ENCODE measurements at regions of chr2 and their contacts with region 1.

Region 1: DNA sequence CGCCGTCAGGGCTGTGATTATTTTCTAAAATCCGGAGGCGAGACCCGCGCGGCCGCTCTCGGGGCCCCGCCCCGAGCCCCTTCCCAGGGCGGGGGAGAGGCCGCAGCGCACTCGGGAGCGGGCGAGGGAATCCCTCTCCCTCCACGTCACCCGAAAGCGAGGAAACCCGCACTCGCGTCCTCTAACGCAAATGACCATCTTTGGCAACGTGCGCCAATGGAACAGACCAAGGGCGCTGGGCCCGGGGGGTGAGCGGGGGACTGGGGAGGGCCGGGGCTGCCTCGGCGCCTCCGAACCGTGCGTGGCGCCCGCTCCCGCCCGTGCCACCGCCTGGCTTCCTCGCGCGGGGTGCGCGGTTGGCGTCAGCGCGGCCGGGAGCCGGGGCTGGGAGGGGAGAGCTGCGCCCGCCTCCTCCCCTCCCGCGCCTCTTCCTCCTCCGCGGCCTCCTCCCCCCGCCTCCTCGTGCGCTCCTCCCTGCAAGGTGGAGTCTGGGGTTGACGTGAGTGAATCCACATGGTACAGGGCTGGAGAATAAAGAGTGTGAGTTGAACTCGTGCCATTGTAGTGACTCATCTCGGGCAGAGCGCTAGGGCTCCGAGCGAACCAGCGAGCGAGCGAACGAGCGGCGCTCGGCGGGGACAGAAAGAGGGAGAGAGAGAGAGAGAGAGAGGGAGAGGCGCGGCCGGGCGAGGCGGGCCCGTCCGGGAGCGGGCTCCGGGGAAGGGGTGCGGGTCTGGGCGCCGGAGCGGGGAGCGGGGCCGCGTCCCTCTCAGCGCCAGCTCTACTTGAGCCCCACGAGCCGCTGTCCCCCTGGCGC is at the start of gene FOSL2:
- DNase-seq: peak; percentile 98 to 99
- H3K4me3 ChIP-seq: peak within 1 kb of the TSS; percentile 69
- H3K4me3 Mint-ChIP-seq: no peak within 1 kb of the TSS
- H3K27ac Mint-ChIP-seq: peak within 1 kb of the TSS; percentile 95
- H3K4me1 ChIP-seq: peaks cover 36% of the 10 kb centered on the region
- H3K4me1 Mint-ChIP-seq: peaks cover 14% of the 10 kb centered on the region
- H3K27me3 ChIP-seq: no peaks in the 10 kb centered on the region
- H3K27me3 Mint-ChIP-seq: no peaks in the 10 kb centered on the region
- CTCF ChIP-seq: no peak
- total RNA-seq, gene FOSL2: 64.6 and 70.7 TPM in 2 replicates

Region 2: DNA sequence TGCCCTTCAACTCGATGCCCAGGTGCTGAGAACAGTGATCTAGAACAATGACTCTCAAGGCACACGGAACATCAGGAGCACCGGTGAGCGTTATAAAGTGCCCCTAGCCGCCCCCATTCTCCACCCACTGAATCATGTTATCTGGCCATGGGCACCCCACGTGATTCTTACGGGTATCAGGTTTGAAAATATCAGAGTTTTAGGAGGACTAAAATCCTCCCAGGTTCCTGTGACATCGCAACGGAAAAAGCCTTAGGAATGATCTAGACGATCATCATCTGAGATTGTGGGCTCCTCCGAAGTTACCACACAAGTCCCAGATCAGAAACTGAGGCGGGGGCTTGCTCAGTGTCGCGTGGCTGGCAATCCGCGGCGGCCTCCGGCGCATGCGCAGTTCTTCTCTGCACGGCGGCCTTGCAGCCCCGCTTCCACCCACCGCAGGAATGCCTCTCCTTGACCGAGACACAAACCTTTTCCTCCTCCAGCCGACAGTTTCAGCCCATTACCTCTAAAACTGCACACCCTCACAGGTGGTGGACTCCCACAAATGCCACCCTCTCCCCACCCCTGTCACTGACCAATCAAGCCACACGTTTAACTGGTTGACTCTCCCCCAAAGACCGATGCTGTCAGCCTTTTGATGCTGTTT is 626.8 kb before region 1 on chr2:
- CTCF ChIA-PET with region 1: no interaction called
- POLR2A ChIA-PET with region 1: no interaction called
- intact Hi-C with region 1: loop called (anchors 5 kb)
- DNase-seq: peak; percentile 95 to 96
- H3K4me3 ChIP-seq: peak overlapping the region; percentile 22
- H3K4me3 Mint-ChIP-seq: peak overlapping the region; percentile 85
- H3K27ac Mint-ChIP-seq: peak overlapping the region; percentile 98
- H3K4me1 ChIP-seq: peaks cover 59% of the 10 kb centered on the region
- H3K4me1 Mint-ChIP-seq: peaks cover 27% of the 10 kb centered on the region
- H3K27me3 ChIP-seq: no peaks in the 10 kb centered on the region
- H3K27me3 Mint-ChIP-seq: no peaks in the 10 kb centered on the region
- CTCF ChIP-seq: no peak

Region 3: DNA sequence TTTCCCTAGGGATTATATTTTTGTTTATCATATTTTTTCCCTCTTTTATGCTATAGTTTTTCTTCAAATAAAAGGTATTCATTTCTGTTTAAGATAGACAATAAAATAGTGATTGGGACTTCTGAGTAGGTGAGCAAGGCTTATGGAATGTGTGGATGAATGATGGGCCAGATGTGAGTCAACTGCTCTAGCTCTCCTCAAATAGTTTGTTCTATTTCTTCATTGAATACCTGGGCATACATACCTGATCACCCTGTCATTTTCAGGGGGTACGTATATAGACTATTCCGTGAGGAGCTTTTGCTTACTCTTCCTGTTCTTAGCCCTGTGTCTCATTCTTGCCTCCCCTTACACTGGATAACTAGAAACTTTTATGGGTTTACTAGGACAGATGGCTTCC is 460.1 kb before region 1 on chr2:
- CTCF ChIA-PET with region 1: no interaction called
- POLR2A ChIA-PET with region 1: interaction called, 5 read pairs
- intact Hi-C with region 1: loop called (anchors 5 kb)
- DNase-seq: peak in 1 of 2 experiments; percentile 31
- H3K4me3 ChIP-seq: no peak overlapping the region
- H3K4me3 Mint-ChIP-seq: peak overlapping the region; percentile 11
- H3K27ac Mint-ChIP-seq: peak overlapping the region; percentile 43
- H3K4me1 ChIP-seq: peaks cover 40% of the 10 kb centered on the region
- H3K4me1 Mint-ChIP-seq: peaks cover 21% of the 10 kb centered on the region
- H3K27me3 ChIP-seq: no peaks in the 10 kb centered on the region
- H3K27me3 Mint-ChIP-seq: no peaks in the 10 kb centered on the region
- CTCF ChIP-seq: no peak

Region 4: GRCh38 chr2:28155627-28156026 is 236.9 kb before region 1 on chr2:
- CTCF ChIA-PET with region 1: no interaction called
- POLR2A ChIA-PET with region 1: no interaction called
- intact Hi-C with region 1: loop called (anchors 2 kb)
- DNase-seq: peak in 1 of 2 experiments; percentile 63
- H3K4me3 ChIP-seq: no peak overlapping the region
- H3K4me3 Mint-ChIP-seq: peak overlapping the region; percentile 18
- H3K27ac Mint-ChIP-seq: peak overlapping the region; percentile 87
- H3K4me1 ChIP-seq: peaks cover 28% of the 10 kb centered on the region
- H3K4me1 Mint-ChIP-seq: peaks cover 24% of the 10 kb centered on the region
- H3K27me3 ChIP-seq: no peaks in the 10 kb centered on the region
- H3K27me3 Mint-ChIP-seq: no peaks in the 10 kb centered on the region
- CTCF ChIP-seq: peak; percentile 82 to 84

Region 5: DNA sequence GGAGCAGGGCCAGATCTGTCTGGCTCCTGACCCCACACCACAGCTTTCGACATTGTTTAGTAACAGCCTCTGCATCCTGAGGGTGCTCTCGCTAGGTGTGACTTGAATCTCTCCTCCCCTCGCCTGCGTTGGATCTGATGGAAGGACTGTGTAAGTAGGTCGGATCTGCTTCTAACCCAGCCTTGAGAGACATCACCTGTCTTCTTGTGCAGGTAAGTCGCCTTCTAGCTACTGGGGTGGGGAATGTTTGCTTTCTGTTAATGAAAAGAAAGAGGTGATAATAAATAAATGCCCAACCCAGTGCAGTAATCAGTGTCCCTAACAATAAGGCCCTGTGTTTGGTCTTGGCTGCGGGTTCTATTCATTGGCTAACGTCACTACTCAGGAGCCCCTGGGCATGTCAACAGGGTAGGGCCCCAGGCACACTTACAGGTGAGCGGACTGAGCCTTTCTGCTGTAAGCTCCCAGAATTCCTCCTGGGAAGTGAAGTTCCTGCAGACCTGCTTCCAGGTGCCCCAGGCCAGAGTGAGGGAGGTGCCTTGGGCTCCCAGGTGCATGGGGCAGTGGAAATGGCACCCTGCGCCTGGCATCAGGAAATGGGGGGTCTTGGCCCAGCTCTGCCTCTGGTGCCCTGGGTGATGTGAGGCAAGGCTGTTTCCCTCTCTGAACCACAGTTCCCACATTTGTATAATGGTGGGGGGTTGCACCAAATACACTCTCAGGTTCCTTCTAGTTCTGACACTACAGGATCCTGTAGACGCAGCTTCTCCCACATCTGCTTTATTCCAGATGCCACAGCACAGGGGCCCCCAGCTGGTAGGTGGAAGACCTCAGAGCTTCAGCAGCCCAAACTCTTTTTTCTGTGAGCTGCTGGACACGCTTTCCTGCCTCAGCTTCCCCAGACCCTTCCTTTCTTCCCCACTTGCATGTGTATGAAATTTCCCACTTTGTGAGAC is 11.0 kb before region 1 on chr2:
- CTCF ChIA-PET with region 1: no interaction called
- POLR2A ChIA-PET with region 1: interaction called, 18 read pairs
- intact Hi-C with region 1: no loop called
- DNase-seq: peak; percentile 39 to 77
- H3K4me3 ChIP-seq: no peak overlapping the region
- H3K4me3 Mint-ChIP-seq: no peak overlapping the region
- H3K27ac Mint-ChIP-seq: peak overlapping the region; percentile 45
- H3K4me1 ChIP-seq: peaks cover 39% of the 10 kb centered on the region
- H3K4me1 Mint-ChIP-seq: peaks cover 13% of the 10 kb centered on the region
- H3K27me3 ChIP-seq: no peaks in the 10 kb centered on the region
- H3K27me3 Mint-ChIP-seq: no peaks in the 10 kb centered on the region
- CTCF ChIP-seq: no peak

Measured in Caco-2 (cell line).